Mammary epithelial cell (primary cell): ENCODE measurements at regions of chr9 and their contacts with region 1.

Region 1: GRCh38 chr9:19925817-19926503 is 137.1 kb upstream of the SLC24A2 start:
- DNase-seq: peak; percentile 86
- H3K4me3 ChIP-seq: peak overlapping the region; percentile 21 to 39 (median 36)
- H3K27ac ChIP-seq: no peak overlapping the region
- H3K4me1 ChIP-seq: no peaks in the 10 kb centered on the region
- H3K27me3 ChIP-seq: no peaks in the 10 kb centered on the region
- CTCF ChIP-seq: peak; percentile 96 to 98

Region 2: GRCh38 chr9:19485188-19485587 is 440.8 kb before region 1 on chr9:
- CTCF ChIA-PET with region 1: interaction called, 4 read pairs
- dilution Hi-C with region 1: no loop called
- in situ Hi-C with region 1: loop called (anchors 5 to 10 kb)
- intact Hi-C with region 1: no loop called
- DNase-seq: peak; percentile 37
- H3K4me3 ChIP-seq: no peak overlapping the region
- H3K27ac ChIP-seq: no peak overlapping the region
- H3K4me1 ChIP-seq: peaks cover 7% of the 10 kb centered on the region
- H3K27me3 ChIP-seq: no peaks in the 10 kb centered on the region
- CTCF ChIP-seq: no peak

Region 3: GRCh38 chr9:19583890-19584289 is 342.1 kb before region 1 on chr9:
- CTCF ChIA-PET with region 1: no interaction called
- dilution Hi-C with region 1: no loop called
- in situ Hi-C with region 1: no loop called
- intact Hi-C with region 1: loop called (anchors 2 kb)
- DNase-seq: no peak
- H3K4me3 ChIP-seq: no peak overlapping the region
- H3K27ac ChIP-seq: no peak overlapping the region
- H3K4me1 ChIP-seq: no peaks in the 10 kb centered on the region
- H3K27me3 ChIP-seq: no peaks in the 10 kb centered on the region
- CTCF ChIP-seq: peak; percentile 19 to 28

Region 4: GRCh38 chr9:20356403-20357035 is 430.6 kb after region 1 on chr9:
- CTCF ChIA-PET with region 1: no interaction called
- dilution Hi-C with region 1: no loop called
- in situ Hi-C with region 1: loop called in 1 of 2 experiments (anchors 10 kb)
- intact Hi-C with region 1: loop called (anchors 1 kb)
- DNase-seq: peak; percentile 70
- H3K4me3 ChIP-seq: no peak overlapping the region
- H3K27ac ChIP-seq: no peak overlapping the region
- H3K4me1 ChIP-seq: peaks cover 9% of the 10 kb centered on the region
- H3K27me3 ChIP-seq: no peaks in the 10 kb centered on the region
- CTCF ChIP-seq: peak; percentile 85 to 89

Region 5: DNA sequence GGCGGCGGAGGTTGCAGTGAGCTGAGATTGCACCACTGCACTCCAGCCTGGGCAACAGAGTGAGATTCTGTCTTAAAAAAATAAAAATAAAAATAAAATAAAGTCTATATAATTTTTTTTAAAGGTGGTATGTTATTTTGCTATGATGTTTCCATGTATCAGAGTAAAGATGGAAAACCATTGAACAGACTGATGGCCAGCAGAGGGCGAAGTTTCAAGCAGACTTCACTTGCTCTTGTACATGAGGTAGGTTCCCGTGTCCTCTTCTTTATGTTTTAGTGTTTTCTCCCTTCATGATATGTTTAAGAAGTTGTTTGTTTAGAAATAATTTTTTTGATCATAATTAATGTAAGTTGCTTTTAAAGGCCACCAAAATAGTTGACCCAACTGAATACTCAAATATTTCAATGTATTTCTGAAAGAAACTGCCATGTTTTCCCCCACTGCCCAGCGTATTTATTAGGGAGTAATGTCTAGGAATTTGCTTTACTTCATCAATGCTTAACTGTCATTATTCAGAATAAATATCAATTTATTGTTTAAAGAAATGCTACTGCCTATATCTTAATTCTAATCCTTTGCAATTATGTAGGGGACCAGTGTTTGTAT is 959.1 kb after region 1 on chr9:
- CTCF ChIA-PET with region 1: no interaction called
- dilution Hi-C with region 1: no loop called
- in situ Hi-C with region 1: no loop called
- intact Hi-C with region 1: loop called (anchors 2 kb)
- DNase-seq: peak; percentile 37
- H3K4me3 ChIP-seq: no peak overlapping the region
- H3K27ac ChIP-seq: no peak overlapping the region
- H3K4me1 ChIP-seq: no peaks in the 10 kb centered on the region
- H3K27me3 ChIP-seq: no peaks in the 10 kb centered on the region
- CTCF ChIP-seq: peak; percentile 57 to 73